Activated CD4-positive, alpha-beta memory T cell treated with anti-CD3 and anti-CD28 coated beads, Interleukin-2, amount 10 ng/mL, durations not matched to agents 7 days and 5 days (primary cell): ENCODE measurements at regions of chr3 and their contacts with region 1.

Region 1: DNA sequence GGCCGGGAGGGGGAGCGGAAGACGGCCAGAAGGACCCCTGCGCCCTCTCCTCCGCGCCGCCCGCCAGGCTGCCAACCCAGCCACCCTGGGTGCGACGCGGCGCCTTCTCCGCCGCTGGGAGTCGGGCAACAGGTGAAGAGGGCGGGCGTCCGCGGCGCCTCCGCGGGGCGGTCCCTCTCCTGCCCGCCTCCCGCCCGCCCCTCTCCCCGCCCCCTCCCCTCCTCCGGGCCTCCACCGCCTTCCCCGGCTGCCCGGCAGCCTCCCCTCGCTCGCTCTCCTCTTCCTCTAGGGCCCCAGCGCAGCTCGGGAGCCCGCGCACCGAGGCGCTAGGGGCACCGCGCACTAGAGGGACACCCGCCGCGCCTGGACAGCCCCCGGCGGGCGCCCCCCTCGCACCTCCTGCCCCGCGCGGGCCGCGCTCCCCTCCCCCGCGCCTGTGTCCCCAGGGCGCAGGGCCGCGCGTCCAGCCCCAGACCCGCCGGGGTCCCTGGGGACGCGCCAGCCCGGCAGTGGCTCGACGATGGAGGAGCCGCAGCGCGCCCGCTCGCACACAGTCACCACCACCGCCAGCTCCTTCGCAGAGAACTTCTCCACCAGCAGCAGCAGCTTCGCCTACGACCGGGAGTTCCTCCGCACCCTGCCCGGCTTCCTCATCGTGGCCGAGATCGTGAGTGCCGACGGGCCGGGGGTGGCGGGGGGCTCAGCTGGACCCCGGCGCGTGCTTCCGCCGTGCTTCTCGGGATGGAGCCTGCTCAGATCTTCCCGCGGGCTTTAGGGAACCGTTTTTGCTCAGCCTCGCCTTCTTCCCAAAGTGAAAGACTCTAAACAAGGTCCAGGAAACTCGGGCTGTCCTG is at the start of gene CMTM8:
- DNase-seq: peak; percentile 69
- H3K4me3 Mint-ChIP-seq: peak within 1 kb of the TSS; percentile 79
- H3K27ac Mint-ChIP-seq: no peak within 1 kb of the TSS
- H3K4me1 Mint-ChIP-seq: peaks cover 22% of the 10 kb centered on the region
- H3K27me3 Mint-ChIP-seq: peaks cover 31% of the 10 kb centered on the region
- total RNA-seq, gene CMTM8: 5.7 to 6.2 TPM

Region 2: DNA sequence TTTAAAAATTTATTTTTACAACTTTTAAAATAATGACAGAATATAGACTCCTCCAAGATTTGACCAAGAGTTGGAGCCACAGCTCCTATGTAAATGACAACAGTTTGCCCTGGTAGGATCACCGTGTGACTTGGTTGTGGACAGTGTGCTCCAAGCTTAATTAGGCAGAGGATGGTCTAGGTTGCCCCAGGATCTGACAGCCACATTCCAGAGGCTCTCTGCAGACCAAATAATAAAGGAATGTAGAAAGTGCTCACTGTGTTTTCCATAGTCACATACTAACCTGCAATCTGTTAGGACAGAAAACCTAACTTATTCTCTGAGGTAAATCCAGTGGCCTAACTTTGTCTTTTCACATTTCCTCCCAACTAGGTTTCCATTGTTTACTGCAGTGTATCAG is 73.2 kb before region 1 on chr3:
- CTCF ChIA-PET with region 1: no interaction called
- POLR2A ChIA-PET with region 1: no interaction called
- DNase-seq: no peak
- H3K4me3 Mint-ChIP-seq: no peak overlapping the region
- H3K27ac Mint-ChIP-seq: no peak overlapping the region
- H3K4me1 Mint-ChIP-seq: no peaks in the 10 kb centered on the region
- H3K27me3 Mint-ChIP-seq: no peaks in the 10 kb centered on the region

Region 3: DNA sequence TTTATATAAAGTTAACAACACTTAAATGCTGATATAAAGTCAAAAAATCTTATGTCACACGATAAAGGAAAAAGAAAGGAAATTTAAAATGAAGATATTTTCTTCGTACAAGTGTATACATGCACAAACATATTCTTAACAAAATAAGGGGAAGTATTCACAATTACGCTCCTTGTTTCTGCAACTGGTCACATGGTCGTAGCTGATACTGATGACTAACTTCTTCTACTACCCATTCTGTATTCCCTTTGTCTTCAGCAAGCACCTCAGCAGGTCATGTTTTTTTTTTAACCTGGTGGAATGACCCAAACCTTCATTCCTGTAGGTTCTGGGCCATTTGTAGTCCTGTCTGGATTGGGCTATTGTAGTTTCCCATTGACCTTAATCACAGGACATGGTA is 30.2 kb before region 1 on chr3:
- CTCF ChIA-PET with region 1: no interaction called
- POLR2A ChIA-PET with region 1: no interaction called
- DNase-seq: no peak
- H3K4me3 Mint-ChIP-seq: no peak overlapping the region
- H3K27ac Mint-ChIP-seq: no peak overlapping the region
- H3K4me1 Mint-ChIP-seq: no peaks in the 10 kb centered on the region
- H3K27me3 Mint-ChIP-seq: peaks cover 6% of the 10 kb centered on the region

Region 4: GRCh38 chr3:32285891-32286290 is 47.2 kb after region 1 on chr3:
- CTCF ChIA-PET with region 1: interaction called, 15 read pairs
- POLR2A ChIA-PET with region 1: interaction called, 14 read pairs
- DNase-seq: no peak
- H3K4me3 Mint-ChIP-seq: no peak overlapping the region
- H3K27ac Mint-ChIP-seq: peak overlapping the region; percentile 65
- H3K4me1 Mint-ChIP-seq: peaks cover 29% of the 10 kb centered on the region
- H3K27me3 Mint-ChIP-seq: no peaks in the 10 kb centered on the region

Region 5: DNA sequence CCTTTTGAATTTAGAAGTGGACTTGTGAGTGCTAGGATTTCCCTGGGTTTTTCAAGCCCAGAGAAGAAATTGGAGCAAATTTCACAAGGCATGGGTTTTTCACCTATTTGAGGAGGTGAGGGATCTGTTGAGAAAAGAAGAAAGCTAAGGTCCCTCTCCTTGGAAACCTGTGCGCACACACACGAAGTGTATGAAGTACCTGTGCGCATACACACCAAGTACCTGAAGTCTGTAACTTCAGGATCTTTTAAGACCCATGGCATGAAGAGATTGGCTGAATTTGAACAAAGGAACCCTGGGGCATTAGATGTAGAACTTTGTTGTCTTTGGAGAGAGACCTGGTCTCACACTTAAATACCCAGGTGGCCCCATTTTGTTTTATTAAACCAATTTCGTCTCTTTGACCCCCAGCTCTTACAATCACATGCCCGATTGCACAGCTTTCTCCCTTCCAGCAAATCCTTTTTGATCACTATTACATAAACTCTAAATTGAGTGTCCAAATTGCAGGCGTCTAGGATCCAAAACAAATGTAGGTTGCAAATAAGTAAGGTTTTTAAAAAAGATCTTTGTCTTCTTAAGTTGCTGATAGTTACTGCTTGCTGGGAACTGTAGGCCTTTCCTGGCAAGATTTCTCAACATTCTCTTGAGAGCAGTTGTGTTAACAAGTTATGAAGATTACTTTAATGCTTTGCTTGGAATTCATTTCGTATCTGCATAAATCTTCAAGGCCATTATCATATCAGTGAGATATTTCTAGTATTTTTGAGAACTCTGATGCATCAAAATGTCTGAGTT is 64.1 kb after region 1 on chr3:
- CTCF ChIA-PET with region 1: interaction called, 11 read pairs
- POLR2A ChIA-PET with region 1: interaction called, 5 read pairs
- DNase-seq: no peak
- H3K4me3 Mint-ChIP-seq: peak overlapping the region; percentile 46
- H3K27ac Mint-ChIP-seq: peak overlapping the region; percentile 94
- H3K4me1 Mint-ChIP-seq: peaks cover 45% of the 10 kb centered on the region
- H3K27me3 Mint-ChIP-seq: no peaks in the 10 kb centered on the region